Heart left ventricle (tissue), 16 donors: ENCODE measurements at regions of chr11 and their contacts with region 1.

Region 1: DNA sequence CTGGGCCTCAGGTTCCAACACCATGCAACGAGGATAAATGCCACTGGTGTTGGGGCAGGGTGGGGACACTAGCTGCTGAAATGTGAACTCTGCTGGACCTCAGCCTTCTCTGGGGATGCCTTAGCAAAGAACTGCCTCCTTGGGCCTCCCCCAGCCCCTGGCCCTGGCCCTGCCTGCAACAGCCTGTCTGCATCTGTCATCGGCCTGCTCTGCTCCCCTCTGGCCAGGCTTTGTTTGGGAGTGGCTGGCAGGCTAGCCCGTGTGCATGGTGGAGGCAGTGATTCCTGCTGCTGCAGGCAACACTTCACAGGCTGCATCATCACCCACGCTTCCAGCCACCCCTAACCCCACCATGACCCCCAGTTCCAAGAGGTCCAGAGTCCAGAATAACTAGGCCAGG is 11.5 kb upstream of the MYOD1 start:
- DNase-seq: no peak
- ATAC-seq: no peak
- H3K4me3 ChIP-seq: no peak overlapping the region
- H3K27ac ChIP-seq: no peak overlapping the region
- H3K4me1 ChIP-seq: no peaks in the 10 kb centered on the region
- H3K27me3 ChIP-seq: peaks cover 0 to 11% (median 0%) of the 10 kb centered on the region in 9 donors
- CTCF ChIP-seq: no peak
- POLR2A ChIP-seq: no peak

Region 2: GRCh38 chr11:17629113-17629512 is 78.7 kb before region 1 on chr11:
- intact Hi-C with region 1: loop called in 1 of 10 experiments (anchors 5 kb)
- DNase-seq: no peak
- ATAC-seq: no peak
- H3K4me3 ChIP-seq: no peak overlapping the region
- H3K27ac ChIP-seq: no peak overlapping the region
- H3K4me1 ChIP-seq: no peaks in the 10 kb centered on the region
- H3K27me3 ChIP-seq: peaks cover 0 to 10% (median 3%) of the 10 kb centered on the region in 9 donors
- CTCF ChIP-seq: no peak
- POLR2A ChIP-seq: no peak

Region 3: GRCh38 chr11:17650127-17650911 is 57.5 kb before region 1 on chr11:
- intact Hi-C with region 1: no loop called
- DNase-seq: no peak
- ATAC-seq: no peak
- H3K4me3 ChIP-seq: no peak overlapping the region
- H3K27ac ChIP-seq: no peak overlapping the region
- H3K4me1 ChIP-seq: no peaks in the 10 kb centered on the region
- H3K27me3 ChIP-seq: peaks cover 0 to 14% (median 6%) of the 10 kb centered on the region in 9 donors
- CTCF ChIP-seq: no peak
- POLR2A ChIP-seq: no peak